Psoas muscle (tissue), 8 donors: ENCODE measurements at regions of chrX and their contacts with region 1.

Region 1: GRCh38 chrX:140141444-140142029 is 176.2 kb upstream of the CXorf66 start:
- DNase-seq: no peak
- ATAC-seq: no peak
- H3K4me3 ChIP-seq: no peak overlapping the region
- H3K27ac ChIP-seq: no peak overlapping the region
- H3K4me1 ChIP-seq: no peaks in the 10 kb centered on the region
- H3K27me3 ChIP-seq: peaks cover 0 to 3% (median 0%) of the 10 kb centered on the region in 3 donors
- CTCF ChIP-seq: peak; percentile 58

Region 2: DNA sequence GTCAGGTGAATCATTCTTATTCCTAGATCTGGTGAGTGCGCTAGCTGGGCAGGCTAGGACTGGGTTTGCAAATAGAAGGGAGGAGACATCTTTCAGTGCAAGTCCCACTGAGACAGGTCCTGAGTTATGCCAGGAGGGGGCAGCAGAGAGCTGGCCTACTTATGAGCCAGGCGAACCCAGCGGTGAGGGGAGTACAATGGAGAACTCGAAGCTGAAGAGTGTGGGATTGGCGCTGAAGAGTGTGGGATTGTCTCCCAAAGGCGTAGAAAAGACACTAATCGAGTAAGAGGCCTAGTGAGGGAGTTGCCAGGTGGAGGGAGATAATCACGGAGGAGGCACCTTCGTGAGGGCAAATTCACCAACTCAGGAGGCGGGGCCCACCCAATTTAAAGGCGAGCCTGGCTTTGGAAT is 84.5 kb before region 1 on chrX:
- intact Hi-C with region 1: loop called in 1 of 2 experiments (anchors 5 kb)
- DNase-seq: peak; percentile 45 to 72
- ATAC-seq: peak; percentile 65 to 75 (median 70)
- H3K4me3 ChIP-seq: no peak overlapping the region
- H3K27ac ChIP-seq: no peak overlapping the region
- H3K4me1 ChIP-seq: no peaks in the 10 kb centered on the region
- H3K27me3 ChIP-seq: no peaks in the 10 kb centered on the region
- CTCF ChIP-seq: peak; percentile 73

Region 3: GRCh38 chrX:140071037-140071436 is 70.5 kb before region 1 on chrX:
- intact Hi-C with region 1: loop called in 1 of 2 experiments (anchors 5 kb)
- DNase-seq: no peak
- ATAC-seq: no peak
- H3K4me3 ChIP-seq: no peak overlapping the region
- H3K27ac ChIP-seq: no peak overlapping the region
- H3K4me1 ChIP-seq: no peaks in the 10 kb centered on the region
- H3K27me3 ChIP-seq: no peaks in the 10 kb centered on the region
- CTCF ChIP-seq: no peak

Region 4: GRCh38 chrX:140229187-140229586 is 87.7 kb after region 1 on chrX:
- intact Hi-C with region 1: no loop called
- DNase-seq: no peak
- ATAC-seq: no peak
- H3K4me3 ChIP-seq: no peak overlapping the region
- H3K27ac ChIP-seq: no peak overlapping the region
- H3K4me1 ChIP-seq: no peaks in the 10 kb centered on the region
- H3K27me3 ChIP-seq: no peaks in the 10 kb centered on the region
- CTCF ChIP-seq: no peak